CD4-positive, alpha-beta T cell (primary cell): ENCODE measurements at regions of chr15 and their contacts with region 1.

Region 1: DNA sequence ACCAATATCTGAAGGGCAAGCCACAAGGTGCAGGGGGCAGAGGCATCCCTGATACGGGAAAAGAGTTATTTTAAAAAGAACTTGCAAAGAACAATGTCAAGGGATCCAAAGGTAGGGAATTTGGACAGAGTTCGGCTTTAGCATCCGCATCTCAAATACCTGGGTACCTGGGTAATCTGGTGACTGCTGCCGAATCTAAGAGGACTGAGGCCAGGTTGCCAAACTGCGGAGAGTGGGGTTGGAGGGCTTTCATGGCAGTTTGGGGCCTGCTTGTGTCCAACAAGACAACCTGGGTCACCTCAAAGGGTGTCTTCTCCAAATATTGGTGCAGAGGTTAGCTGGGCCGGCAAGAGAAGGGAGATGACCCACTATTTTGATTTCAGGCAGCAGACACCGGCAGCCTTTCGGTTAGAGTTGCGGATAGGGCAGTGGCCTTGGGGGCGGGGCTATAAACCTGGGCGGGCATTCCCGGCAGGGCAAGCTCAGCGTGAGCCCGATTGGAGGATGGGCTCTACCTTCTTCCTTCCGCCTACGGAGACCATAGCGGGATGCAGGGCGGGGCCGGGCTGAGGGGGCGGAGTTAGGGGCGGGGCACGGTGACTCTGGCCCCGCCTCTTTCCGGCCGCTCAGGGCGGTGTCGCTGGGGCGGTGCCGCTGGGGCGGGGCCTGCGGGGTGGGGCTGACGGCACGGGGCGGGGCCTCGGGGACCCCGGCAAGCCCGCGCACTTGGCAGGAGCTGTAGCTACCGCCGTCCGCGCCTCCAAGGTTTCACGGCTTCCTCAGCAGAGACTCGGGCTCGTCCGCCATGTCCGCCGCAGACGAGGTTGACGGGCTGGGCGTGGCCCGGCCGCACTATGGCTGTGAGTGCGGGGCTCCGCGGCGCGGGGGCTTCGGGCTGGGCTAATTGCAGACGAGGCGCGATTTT is at the start of gene IQGAP1:
- DNase-seq: peak; percentile 91 to 98 (median 96)
- ATAC-seq: peak; percentile 88
- H3K4me3 ChIP-seq: peak within 1 kb of the TSS; percentile 89
- H3K4me3 Mint-ChIP-seq: peak within 1 kb of the TSS; percentile 95
- H3K27ac ChIP-seq: peak within 1 kb of the TSS; percentile 73 to 75
- H3K27ac Mint-ChIP-seq: peak within 1 kb of the TSS; percentile 95
- H3K4me1 ChIP-seq: peaks cover 38% of the 10 kb centered on the region
- H3K4me1 Mint-ChIP-seq: peaks cover 51% of the 10 kb centered on the region
- H3K27me3 ChIP-seq: no peaks in the 10 kb centered on the region
- H3K27me3 Mint-ChIP-seq: no peaks in the 10 kb centered on the region
- CTCF ChIP-seq: no peak
- total RNA-seq, gene IQGAP1: 76.8 to 78.7 TPM

Region 2: GRCh38 chr15:90249203-90249863 is 138.5 kb before region 1 on chr15 and contains the start of gene TTLL13:
- CTCF ChIA-PET with region 1: no interaction called
- POLR2A ChIA-PET with region 1: no interaction called
- intact Hi-C with region 1: no loop called
- DNase-seq: peak; percentile 33 to 87 (median 60)
- ATAC-seq: peak; percentile 70
- H3K4me3 ChIP-seq: peak within 1 kb of the TSS; percentile 61
- H3K4me3 Mint-ChIP-seq: peak within 1 kb of the TSS; percentile 76
- H3K27ac ChIP-seq: no peak within 1 kb of the TSS
- H3K27ac Mint-ChIP-seq: peak within 1 kb of the TSS; percentile 63
- H3K4me1 ChIP-seq: peaks cover 19% of the 10 kb centered on the region
- H3K4me1 Mint-ChIP-seq: peaks cover 17% of the 10 kb centered on the region
- H3K27me3 ChIP-seq: no peaks in the 10 kb centered on the region
- H3K27me3 Mint-ChIP-seq: no peaks in the 10 kb centered on the region
- CTCF ChIP-seq: no peak
- total RNA-seq, gene TTLL13: 0.63 to 1.8 TPM

Region 3: DNA sequence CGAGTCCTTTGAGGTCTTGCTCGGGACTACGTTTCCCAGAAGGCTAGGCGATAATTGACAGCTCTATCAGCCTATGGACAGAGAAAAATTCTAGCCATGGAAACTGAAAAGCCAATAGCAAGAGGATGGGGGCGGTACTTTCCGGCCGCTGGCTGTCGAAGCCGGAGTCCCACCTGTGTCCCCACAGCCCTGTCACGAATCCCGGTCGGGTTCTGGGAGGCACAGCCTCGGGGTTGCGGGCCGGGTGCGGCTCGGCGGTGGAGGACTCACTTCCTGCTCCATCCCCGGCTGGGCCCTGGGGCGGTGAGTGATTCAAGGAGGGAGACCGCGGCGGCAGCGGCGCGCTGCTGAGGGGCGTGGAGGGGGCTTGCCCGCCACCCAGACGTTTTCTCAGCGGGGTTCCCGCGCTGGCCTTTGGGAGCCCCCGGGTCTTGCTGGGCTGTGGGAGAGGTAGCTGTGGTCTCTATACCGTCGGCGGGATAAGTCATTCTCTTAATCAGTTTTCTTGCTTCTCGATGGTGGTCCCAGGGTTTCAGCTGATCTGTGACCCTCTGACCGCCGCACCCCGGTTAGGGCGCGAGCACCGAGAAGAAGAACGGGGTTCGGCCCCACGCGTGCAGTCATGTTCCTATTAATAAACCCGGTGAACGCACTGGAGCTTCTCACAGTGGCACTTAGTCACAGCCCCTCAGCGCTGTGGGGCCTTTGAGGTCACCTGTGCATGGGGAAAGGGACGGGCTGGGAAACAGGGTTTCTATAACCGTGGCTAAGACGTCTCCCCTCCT is 35.5 kb before region 1 on chr15 and contains the start of gene ZNF774:
- CTCF ChIA-PET with region 1: no interaction called
- POLR2A ChIA-PET with region 1: interaction called, 7 read pairs
- intact Hi-C with region 1: loop called in 1 of 2 experiments (anchors 1 kb)
- DNase-seq: peak; percentile 78 to 97 (median 84)
- ATAC-seq: peak; percentile 98
- H3K4me3 ChIP-seq: peak within 1 kb of the TSS; percentile 68
- H3K4me3 Mint-ChIP-seq: peak within 1 kb of the TSS; percentile 90
- H3K27ac ChIP-seq: no peak within 1 kb of the TSS
- H3K27ac Mint-ChIP-seq: peak within 1 kb of the TSS; percentile 56
- H3K4me1 ChIP-seq: peaks cover 20% of the 10 kb centered on the region
- H3K4me1 Mint-ChIP-seq: peaks cover 9% of the 10 kb centered on the region
- H3K27me3 ChIP-seq: no peaks in the 10 kb centered on the region
- H3K27me3 Mint-ChIP-seq: no peaks in the 10 kb centered on the region
- CTCF ChIP-seq: no peak
- total RNA-seq, gene ZNF774: 0.20 to 1.1 TPM

Region 4: GRCh38 chr15:90362936-90363212 is 24.9 kb before region 1 on chr15:
- CTCF ChIA-PET with region 1: interaction called, 14 read pairs
- POLR2A ChIA-PET with region 1: interaction called, 38 read pairs
- intact Hi-C with region 1: loop called in 1 of 2 experiments (anchors 1 kb)
- DNase-seq: no peak
- ATAC-seq: no peak
- H3K4me3 ChIP-seq: no peak overlapping the region
- H3K4me3 Mint-ChIP-seq: no peak overlapping the region
- H3K27ac ChIP-seq: no peak overlapping the region
- H3K27ac Mint-ChIP-seq: no peak overlapping the region
- H3K4me1 ChIP-seq: peaks cover 13% of the 10 kb centered on the region
- H3K4me1 Mint-ChIP-seq: peaks cover 28% of the 10 kb centered on the region
- H3K27me3 ChIP-seq: no peaks in the 10 kb centered on the region
- H3K27me3 Mint-ChIP-seq: no peaks in the 10 kb centered on the region
- CTCF ChIP-seq: no peak

Region 5: GRCh38 chr15:90376789-90377188 is 11.0 kb before region 1 on chr15:
- CTCF ChIA-PET with region 1: no interaction called
- POLR2A ChIA-PET with region 1: interaction called, 45 read pairs
- intact Hi-C with region 1: loop called in 1 of 2 experiments (anchors 1 kb)
- DNase-seq: peak; percentile 41 to 89 (median 52)
- ATAC-seq: peak; percentile 98
- H3K4me3 ChIP-seq: no peak overlapping the region
- H3K4me3 Mint-ChIP-seq: peak overlapping the region; percentile 70
- H3K27ac ChIP-seq: no peak overlapping the region
- H3K27ac Mint-ChIP-seq: peak overlapping the region; percentile 21
- H3K4me1 ChIP-seq: peaks cover 41% of the 10 kb centered on the region
- H3K4me1 Mint-ChIP-seq: peaks cover 56% of the 10 kb centered on the region
- H3K27me3 ChIP-seq: no peaks in the 10 kb centered on the region
- H3K27me3 Mint-ChIP-seq: no peaks in the 10 kb centered on the region
- CTCF ChIP-seq: no peak

Region 6: DNA sequence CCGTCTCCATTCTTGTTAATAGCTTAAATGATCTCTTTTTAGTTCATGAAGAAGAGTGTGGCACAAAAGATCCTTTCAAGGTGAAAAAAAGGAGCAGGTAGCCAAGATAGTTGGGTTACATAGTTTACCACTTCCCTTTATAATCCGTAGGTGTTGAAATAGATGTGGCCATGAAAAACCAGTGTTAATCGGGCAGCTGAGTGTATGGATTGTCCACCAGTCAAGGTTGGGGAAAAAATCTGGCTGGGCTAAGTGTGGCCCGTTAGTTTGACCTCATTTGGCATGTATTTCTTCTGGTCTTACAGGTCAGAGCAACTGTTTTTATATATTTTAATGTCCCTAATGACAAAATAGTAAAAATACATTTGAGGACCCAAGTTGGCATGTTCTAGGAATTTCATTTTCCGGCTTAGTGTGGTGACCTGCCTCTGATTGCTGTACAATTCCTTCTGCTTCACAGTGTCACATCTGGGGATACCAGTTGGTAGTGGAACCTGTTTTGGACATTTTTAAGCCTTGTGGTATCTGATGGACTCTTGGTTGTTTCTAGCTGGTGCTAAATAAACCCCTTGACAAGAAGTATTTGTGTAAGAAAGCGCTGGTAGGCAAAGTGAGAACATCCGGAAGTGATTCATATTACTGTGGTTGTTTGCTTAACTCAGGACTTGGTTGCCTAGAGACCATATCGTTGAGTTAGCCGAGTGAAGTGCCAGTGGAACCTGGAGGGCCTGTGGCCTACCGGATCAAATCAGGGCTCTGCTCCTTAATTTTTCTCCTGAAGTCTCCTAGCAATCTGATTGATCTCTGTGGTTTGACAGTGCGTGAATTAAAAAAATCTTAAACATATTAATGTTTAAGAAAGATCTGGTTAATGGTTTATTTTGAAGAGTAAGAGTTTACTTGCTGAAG is 12.9 kb after region 1 on chr15:
- CTCF ChIA-PET with region 1: interaction called, 5 read pairs
- POLR2A ChIA-PET with region 1: interaction called, 50 read pairs
- intact Hi-C with region 1: loop called in 1 of 2 experiments (anchors 1 kb)
- DNase-seq: peak; percentile 36 to 94 (median 51)
- ATAC-seq: peak; percentile 98
- H3K4me3 ChIP-seq: peak overlapping the region; percentile 19
- H3K4me3 Mint-ChIP-seq: peak overlapping the region; percentile 86
- H3K27ac ChIP-seq: peak overlapping the region; percentile 73 to 92
- H3K27ac Mint-ChIP-seq: peak overlapping the region; percentile 97
- H3K4me1 ChIP-seq: peaks cover 35% of the 10 kb centered on the region
- H3K4me1 Mint-ChIP-seq: peaks cover 65% of the 10 kb centered on the region
- H3K27me3 ChIP-seq: no peaks in the 10 kb centered on the region
- H3K27me3 Mint-ChIP-seq: no peaks in the 10 kb centered on the region
- CTCF ChIP-seq: no peak

Region 7: GRCh38 chr15:90412356-90413194 is 24.8 kb after region 1 on chr15:
- CTCF ChIA-PET with region 1: interaction called, 3 read pairs
- POLR2A ChIA-PET with region 1: interaction called, 15 read pairs
- intact Hi-C with region 1: no loop called
- DNase-seq: peak in 3 of 14 experiments; percentile 54 to 59 (median 58)
- ATAC-seq: peak; percentile 39
- H3K4me3 ChIP-seq: no peak overlapping the region
- H3K4me3 Mint-ChIP-seq: peak overlapping the region; percentile 49
- H3K27ac ChIP-seq: no peak overlapping the region
- H3K27ac Mint-ChIP-seq: peak overlapping the region; percentile 40
- H3K4me1 ChIP-seq: peaks cover 30% of the 10 kb centered on the region
- H3K4me1 Mint-ChIP-seq: peaks cover 78% of the 10 kb centered on the region
- H3K27me3 ChIP-seq: no peaks in the 10 kb centered on the region
- H3K27me3 Mint-ChIP-seq: no peaks in the 10 kb centered on the region
- CTCF ChIP-seq: no peak

Region 8: GRCh38 chr15:90607361-90607760 is 219.6 kb after region 1 on chr15:
- CTCF ChIA-PET with region 1: no interaction called
- POLR2A ChIA-PET with region 1: no interaction called
- intact Hi-C with region 1: no loop called
- DNase-seq: no peak
- ATAC-seq: no peak
- H3K4me3 ChIP-seq: no peak overlapping the region
- H3K4me3 Mint-ChIP-seq: no peak overlapping the region
- H3K27ac ChIP-seq: no peak overlapping the region
- H3K27ac Mint-ChIP-seq: peak overlapping the region; percentile 39
- H3K4me1 ChIP-seq: peaks cover 5% of the 10 kb centered on the region
- H3K4me1 Mint-ChIP-seq: peaks cover 36% of the 10 kb centered on the region
- H3K27me3 ChIP-seq: no peaks in the 10 kb centered on the region
- H3K27me3 Mint-ChIP-seq: no peaks in the 10 kb centered on the region
- CTCF ChIP-seq: no peak